ENCODE measurements at regions of chr19 and their contacts with region 1.

Region 1: GRCh38 chr19:17135001-17135853 is 59.6 kb downstream of the MYO9B start:
- DNase-seq: peak; percentile 92 to 97
- ATAC-seq: peak; percentile 92 to 96 (median 94)
- H3K4me3 ChIP-seq: peak overlapping the region in 8 of 10 donors; percentile 1 to 49 (median 28)
- H3K27ac ChIP-seq: peak overlapping the region; percentile 85 to 99 (median 90)
- H3K4me1 ChIP-seq: peaks cover 15 to 53% (median 43%) of the 10 kb centered on the region in 9 donors
- H3K27me3 ChIP-seq: no peaks in the 10 kb centered on the region
- CTCF ChIP-seq: peak; percentile 10 to 76 (median 42)

Region 2: GRCh38 chr19:17086120-17086519 is 49.1 kb before region 1 on chr19:
- intact Hi-C with region 1: loop called in 4 of 10 experiments (anchors 2 to 10 kb)
- DNase-seq: no peak
- ATAC-seq: no peak
- H3K4me3 ChIP-seq: no peak overlapping the region
- H3K27ac ChIP-seq: no peak overlapping the region
- H3K4me1 ChIP-seq: peaks cover 4 to 54% (median 39%) of the 10 kb centered on the region in 9 donors
- H3K27me3 ChIP-seq: no peaks in the 10 kb centered on the region
- CTCF ChIP-seq: no peak

Region 3: DNA sequence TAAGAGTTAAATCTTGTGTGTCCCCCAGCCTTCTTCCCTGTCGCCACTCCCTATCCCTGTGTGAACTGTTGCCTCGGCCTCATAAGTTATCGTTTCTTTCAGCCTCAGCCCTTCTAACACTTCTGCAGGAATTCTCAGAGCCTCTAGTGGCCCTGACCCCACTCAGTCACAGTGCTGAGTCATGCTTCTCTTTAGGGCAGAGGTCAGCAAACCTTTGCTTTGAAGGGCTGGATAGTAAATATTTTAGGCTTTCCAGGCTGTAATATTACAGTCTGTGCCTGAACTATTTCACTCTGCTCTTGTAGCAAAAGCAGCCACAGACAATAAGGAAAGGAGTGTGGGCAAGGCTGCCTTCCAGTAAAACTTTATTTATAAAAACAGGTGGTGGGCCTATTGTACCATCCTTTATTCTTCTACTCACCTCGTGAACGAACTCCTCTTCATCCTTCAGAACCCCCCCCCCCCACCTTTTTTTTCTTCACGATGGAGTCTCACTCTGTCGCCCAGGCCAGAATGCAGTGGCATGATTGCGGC is 37.6 kb before region 1 on chr19:
- intact Hi-C with region 1: loop called in 2 of 10 experiments (anchors 5 kb)
- DNase-seq: no peak
- ATAC-seq: peak in 6 of 8 donors; percentile 22 to 61 (median 46)
- H3K4me3 ChIP-seq: no peak overlapping the region
- H3K27ac ChIP-seq: peak overlapping the region in 9 of 10 donors; percentile 24 to 59 (median 45)
- H3K4me1 ChIP-seq: peaks cover 5 to 46% (median 26%) of the 10 kb centered on the region in 9 donors
- H3K27me3 ChIP-seq: no peaks in the 10 kb centered on the region
- CTCF ChIP-seq: no peak